Left cardiac atrium (tissue), 4 donors: ENCODE measurements at regions of chr11 and their contacts with region 1.

Region 1: GRCh38 chr11:304915-305843 is 2.4 kb upstream of the IFITM2 start:
- DNase-seq: peak; percentile 76
- ATAC-seq: peak; percentile 14 to 38

Region 2: GRCh38 chr11:207208-207862 is 97.8 kb before region 1 on chr11 and contains the starts of genes BET1L and RIC8A:
- intact Hi-C with region 1: loop called in 1 of 2 experiments (anchors 5 kb)
- DNase-seq: peak; percentile 97
- ATAC-seq: peak; percentile 91 to 92
- total RNA-seq, gene BET1L: 27.6 to 44.5 TPM
- total RNA-seq, gene RIC8A: 54.1 to 67.4 TPM

Region 3: GRCh38 chr11:223026-223789 is 82.0 kb before region 1 on chr11:
- intact Hi-C with region 1: no loop called
- DNase-seq: no peak
- ATAC-seq: peak in 1 of 2 donors; percentile 38

Region 4: GRCh38 chr11:355581-356458 is 50.6 kb after region 1 on chr11:
- intact Hi-C with region 1: loop called (anchors 5 kb)
- DNase-seq: peak; percentile 98
- ATAC-seq: peak; percentile 86 to 91

Region 5: DNA sequence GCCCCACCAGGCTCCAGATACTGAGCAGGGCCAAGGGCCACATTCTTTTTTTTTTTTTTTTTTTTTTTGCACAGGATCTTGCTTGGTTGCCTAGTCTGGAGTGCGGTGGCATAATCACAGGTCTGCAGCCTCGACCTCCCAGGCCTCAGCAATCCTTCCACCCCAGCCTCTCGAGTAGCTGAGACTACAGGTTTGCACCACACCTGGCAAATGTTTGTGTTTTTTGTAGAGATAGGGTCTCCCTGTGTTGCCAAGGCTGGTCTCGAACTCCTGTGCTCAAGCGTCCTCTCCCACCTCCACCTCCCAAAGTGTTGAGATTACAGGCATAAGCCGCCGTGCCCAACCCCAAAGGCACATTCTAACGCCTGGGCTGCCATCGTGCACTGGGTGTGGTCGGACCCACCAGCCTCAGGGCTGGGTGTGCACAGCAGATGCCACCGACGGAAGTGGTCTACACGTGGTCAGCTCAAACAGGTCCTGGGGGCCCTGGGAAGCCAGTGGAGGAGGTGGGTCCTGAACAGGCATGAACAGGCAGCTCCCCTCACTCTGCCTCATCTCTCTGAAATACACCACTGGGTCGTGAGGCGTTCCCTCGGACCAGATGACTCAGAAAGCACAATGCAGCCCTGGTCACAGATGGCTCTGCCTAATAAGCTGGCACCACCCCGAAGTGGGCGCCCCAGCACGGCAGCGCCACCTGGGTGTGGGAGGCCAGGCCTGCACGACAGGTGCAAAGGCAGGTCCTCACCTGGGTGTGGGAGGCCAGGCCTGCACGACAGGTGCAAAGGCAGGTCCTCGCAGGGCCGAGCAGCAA is 59.0 kb after region 1 on chr11:
- intact Hi-C with region 1: loop called (anchors 5 kb)
- DNase-seq: peak; percentile 31
- ATAC-seq: peak in 1 of 2 donors; percentile 17

Region 6: DNA sequence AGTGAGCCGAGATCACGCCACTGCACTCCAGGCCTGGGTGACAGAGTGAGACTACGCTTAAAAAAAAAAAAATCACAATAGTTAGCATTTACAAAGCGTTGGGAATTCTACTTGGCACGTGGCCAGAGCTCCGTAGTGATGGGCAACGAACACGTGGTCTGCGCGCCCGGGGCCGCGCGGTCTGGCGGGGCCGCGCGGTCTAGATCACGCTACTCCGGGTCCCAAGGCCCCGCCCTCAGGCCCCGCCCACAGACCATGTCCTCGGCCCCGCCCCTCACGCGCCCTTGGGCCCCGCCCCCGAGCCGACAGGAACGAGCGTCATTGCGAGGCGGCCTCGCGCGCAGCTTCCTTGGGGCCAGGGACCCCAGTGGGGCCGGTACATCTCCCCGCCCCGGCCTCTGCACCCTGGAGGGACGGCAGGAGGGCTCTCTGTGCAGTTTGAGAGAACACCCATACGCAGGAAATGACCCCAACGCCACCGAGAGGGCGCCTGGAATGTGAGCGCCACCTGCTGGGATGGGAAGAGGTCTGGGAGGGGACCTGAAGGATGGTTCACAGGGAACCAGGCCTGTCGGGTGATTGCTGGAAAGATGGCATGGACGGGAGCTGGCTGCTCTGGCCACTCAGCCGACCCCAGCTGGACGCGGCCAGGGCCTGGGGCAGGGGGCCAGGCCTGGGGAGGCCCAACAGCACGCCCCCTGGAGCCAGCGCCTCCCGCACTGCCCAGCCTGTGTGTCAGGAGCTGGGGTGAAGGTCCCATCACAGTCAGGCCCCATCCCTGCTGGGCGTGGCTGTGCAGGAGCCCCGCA is 142.9 kb after region 1 on chr11:
- intact Hi-C with region 1: loop called in 1 of 2 experiments (anchors 10 kb)
- DNase-seq: peak; percentile 97
- ATAC-seq: peak; percentile 85 to 89